Activated B cell treated with CpG ODN at 0.5 μM for 24 hours (primary cell): ENCODE measurements at regions of chr2 and their contacts with region 1.

Region 1: DNA sequence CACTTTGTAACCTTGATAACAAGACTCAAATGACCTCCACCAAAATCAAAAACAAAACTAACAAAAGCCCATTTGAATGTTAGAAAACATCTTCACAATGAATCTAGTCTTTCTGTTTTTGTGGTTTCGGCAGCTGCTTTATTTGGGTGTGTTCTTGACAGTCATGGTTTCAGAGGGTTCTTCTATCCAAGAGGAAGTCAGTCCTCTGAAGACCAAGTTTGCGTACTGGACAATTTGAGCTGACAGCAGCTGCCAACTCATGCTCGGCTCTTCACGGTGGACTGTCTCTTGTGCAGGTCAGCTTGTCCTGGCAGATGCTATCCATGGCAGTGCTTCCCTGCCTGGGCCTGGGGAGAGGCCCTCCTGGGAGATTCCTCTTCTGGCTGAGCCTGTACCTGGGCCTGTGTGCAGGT is 91.0 kb downstream of the TMEM17 start:
- DNase-seq: no peak
- ATAC-seq: no peak
- H3K4me3 Mint-ChIP-seq: no peak overlapping the region
- H3K27ac Mint-ChIP-seq: no peak overlapping the region
- H3K4me1 Mint-ChIP-seq: peaks cover 13% of the 10 kb centered on the region
- H3K27me3 Mint-ChIP-seq: peaks cover 9% of the 10 kb centered on the region
- CTCF ChIP-seq: no peak

Region 2: GRCh38 chr2:61924895-61925663 is 489.9 kb before region 1 on chr2:
- CTCF ChIA-PET with region 1: interaction called, 14 read pairs
- POLR2A ChIA-PET with region 1: no interaction called
- intact Hi-C with region 1: no loop called
- DNase-seq: no peak
- ATAC-seq: no peak
- H3K4me3 Mint-ChIP-seq: no peak overlapping the region
- H3K27ac Mint-ChIP-seq: no peak overlapping the region
- H3K4me1 Mint-ChIP-seq: peaks cover 9% of the 10 kb centered on the region
- H3K27me3 Mint-ChIP-seq: no peaks in the 10 kb centered on the region
- CTCF ChIP-seq: no peak

Region 3: DNA sequence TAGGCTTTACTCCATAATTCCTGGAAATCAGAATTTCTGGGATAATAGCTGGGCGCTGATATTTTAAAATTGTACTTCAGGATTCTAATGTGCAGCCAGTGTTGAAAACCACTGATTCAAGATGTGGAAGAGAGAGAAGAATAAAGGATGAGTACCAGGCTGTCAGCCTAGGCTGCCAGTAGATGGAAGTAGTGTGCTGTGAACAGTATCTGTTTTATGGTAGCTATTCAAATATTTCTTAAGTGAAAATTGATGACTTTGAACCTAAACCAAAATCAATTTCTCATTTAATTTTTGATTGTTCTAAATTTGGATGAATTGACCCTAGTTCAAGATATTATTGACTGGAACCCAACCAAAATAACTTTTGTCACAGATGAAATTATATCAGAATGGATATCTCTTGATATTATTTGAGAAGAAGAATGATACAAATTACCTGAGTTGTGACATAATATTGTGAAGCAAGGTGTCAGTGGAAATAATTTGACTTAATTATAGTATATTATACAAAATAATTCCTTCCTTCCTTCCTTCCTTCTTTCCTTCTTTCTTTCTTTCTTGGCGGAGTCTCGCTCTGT is 421.5 kb before region 1 on chr2:
- CTCF ChIA-PET with region 1: interaction called, 119 read pairs
- POLR2A ChIA-PET with region 1: interaction called, 3 read pairs
- intact Hi-C with region 1: loop called (anchors 1 kb)
- DNase-seq: no peak
- ATAC-seq: peak; percentile 75
- H3K4me3 Mint-ChIP-seq: no peak overlapping the region
- H3K27ac Mint-ChIP-seq: no peak overlapping the region
- H3K4me1 Mint-ChIP-seq: peaks cover 2% of the 10 kb centered on the region
- H3K27me3 Mint-ChIP-seq: no peaks in the 10 kb centered on the region
- CTCF ChIP-seq: no peak

Region 4: GRCh38 chr2:62306751-62307468 is 108.1 kb before region 1 on chr2:
- CTCF ChIA-PET with region 1: interaction called, 3 read pairs
- POLR2A ChIA-PET with region 1: no interaction called
- intact Hi-C with region 1: loop called (anchors 5 kb)
- DNase-seq: no peak
- ATAC-seq: peak; percentile 64
- H3K4me3 Mint-ChIP-seq: peak overlapping the region; percentile 42
- H3K27ac Mint-ChIP-seq: peak overlapping the region; percentile 62
- H3K4me1 Mint-ChIP-seq: peaks cover 78% of the 10 kb centered on the region
- H3K27me3 Mint-ChIP-seq: no peaks in the 10 kb centered on the region
- CTCF ChIP-seq: no peak

Region 5: DNA sequence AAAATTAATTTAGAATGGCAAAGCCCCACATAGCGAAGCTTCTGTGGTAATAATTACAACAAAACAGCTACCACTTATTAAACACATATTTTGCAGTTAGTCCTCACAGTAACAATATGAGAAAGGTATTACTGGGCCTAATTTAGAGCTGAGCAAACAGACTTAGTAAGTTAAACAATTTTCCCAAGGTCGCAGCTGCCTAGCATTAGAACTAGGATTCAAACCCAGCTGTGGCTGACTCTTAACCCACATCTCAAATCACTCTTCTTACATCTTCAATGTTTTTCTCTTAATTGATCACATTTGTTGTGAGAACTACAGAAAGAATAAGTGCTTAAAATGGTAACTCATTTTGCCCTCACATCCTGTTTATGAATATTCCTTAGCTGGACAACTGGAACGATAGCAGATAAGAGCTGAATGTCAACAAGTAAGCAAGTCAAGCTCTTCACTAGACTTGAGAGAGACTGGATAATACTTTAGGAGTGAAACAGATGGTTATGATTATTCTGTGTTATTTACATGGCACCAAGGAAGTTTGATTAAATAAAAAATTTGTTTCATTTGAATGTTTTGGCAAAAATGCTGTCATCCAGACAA is 150.4 kb after region 1 on chr2:
- CTCF ChIA-PET with region 1: no interaction called
- POLR2A ChIA-PET with region 1: no interaction called
- intact Hi-C with region 1: no loop called
- DNase-seq: no peak
- ATAC-seq: no peak
- H3K4me3 Mint-ChIP-seq: no peak overlapping the region
- H3K27ac Mint-ChIP-seq: no peak overlapping the region
- H3K4me1 Mint-ChIP-seq: no peaks in the 10 kb centered on the region
- H3K27me3 Mint-ChIP-seq: peaks cover 14% of the 10 kb centered on the region
- CTCF ChIP-seq: no peak